Kidney (tissue), 22 donors: ENCODE measurements at regions of chr17 and their contacts with region 1.

Region 1: GRCh38 chr17:50026901-50027630 is 28.8 kb upstream of the ITGA3 start:
- DNase-seq: peak; percentile 88 to 91 (median 88)
- H3K4me3 ChIP-seq: peak overlapping the region in 1 of 3 donors; percentile 14
- H3K27ac ChIP-seq: peak overlapping the region; percentile 47 to 51
- H3K4me1 ChIP-seq: peaks cover 0 to 14% (median 6%) of the 10 kb centered on the region in 3 donors
- H3K27me3 ChIP-seq: no peaks in the 10 kb centered on the region
- CTCF ChIP-seq: peak; percentile 100

Region 2: DNA sequence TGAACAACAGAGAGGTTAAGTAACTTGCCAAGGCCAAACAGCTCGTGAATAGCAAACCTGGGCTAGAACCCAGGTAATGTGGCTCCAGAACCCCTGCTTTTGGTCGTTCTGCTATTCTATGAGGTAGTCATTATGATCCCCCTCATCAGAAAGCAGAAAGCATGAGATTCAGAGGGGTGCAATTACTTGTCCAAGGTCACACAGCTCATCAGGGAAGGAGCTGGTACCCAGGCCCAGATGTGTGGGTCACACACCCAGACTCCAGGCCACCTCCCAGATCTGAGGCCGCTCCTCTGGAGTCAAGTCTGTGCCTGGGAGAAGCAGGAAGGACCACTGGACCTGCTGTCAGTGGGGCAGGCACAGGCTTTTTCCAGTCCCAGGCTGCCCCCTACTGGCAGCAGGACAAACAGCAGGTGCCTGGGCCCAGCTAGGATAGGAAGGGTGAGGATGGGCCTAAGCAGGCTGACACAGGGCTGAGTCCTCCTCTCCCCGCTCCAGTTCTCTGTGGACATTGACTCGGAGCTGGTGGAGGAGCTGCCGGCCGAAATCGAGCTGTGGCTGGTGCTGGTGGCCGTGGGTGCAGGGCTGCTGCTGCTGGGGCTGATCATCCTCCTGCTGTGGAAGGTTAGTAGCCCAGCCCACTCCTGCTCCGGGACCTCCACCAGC is 60.3 kb after region 1 on chr17:
- intact Hi-C with region 1: loop called (anchors 10 kb)
- DNase-seq: peak; percentile 54 to 89 (median 85)
- H3K4me3 ChIP-seq: no peak overlapping the region
- H3K27ac ChIP-seq: no peak overlapping the region
- H3K4me1 ChIP-seq: no peaks in the 10 kb centered on the region
- H3K27me3 ChIP-seq: no peaks in the 10 kb centered on the region
- CTCF ChIP-seq: peak; percentile 93